ENCODE measurements at regions of chr2 and their contacts with region 1.

Region 1: GRCh38 chr2:64644177-64645004 is 9.3 kb downstream of the SERTAD2 start:
- DNase-seq: peak; percentile 72
- H3K4me3 ChIP-seq: peak overlapping the region; percentile 17 to 50 (median 30)
- H3K27ac ChIP-seq: peak overlapping the region; percentile 87 to 92 (median 90)
- H3K4me1 ChIP-seq: peaks cover 15 to 77% (median 38%) of the 10 kb centered on the region in 4 donors
- H3K27me3 ChIP-seq: no peaks in the 10 kb centered on the region
- CTCF ChIP-seq: no peak
- EP300 ChIP-seq: no peak
- POLR2A ChIP-seq: peak; percentile 71

Region 2: DNA sequence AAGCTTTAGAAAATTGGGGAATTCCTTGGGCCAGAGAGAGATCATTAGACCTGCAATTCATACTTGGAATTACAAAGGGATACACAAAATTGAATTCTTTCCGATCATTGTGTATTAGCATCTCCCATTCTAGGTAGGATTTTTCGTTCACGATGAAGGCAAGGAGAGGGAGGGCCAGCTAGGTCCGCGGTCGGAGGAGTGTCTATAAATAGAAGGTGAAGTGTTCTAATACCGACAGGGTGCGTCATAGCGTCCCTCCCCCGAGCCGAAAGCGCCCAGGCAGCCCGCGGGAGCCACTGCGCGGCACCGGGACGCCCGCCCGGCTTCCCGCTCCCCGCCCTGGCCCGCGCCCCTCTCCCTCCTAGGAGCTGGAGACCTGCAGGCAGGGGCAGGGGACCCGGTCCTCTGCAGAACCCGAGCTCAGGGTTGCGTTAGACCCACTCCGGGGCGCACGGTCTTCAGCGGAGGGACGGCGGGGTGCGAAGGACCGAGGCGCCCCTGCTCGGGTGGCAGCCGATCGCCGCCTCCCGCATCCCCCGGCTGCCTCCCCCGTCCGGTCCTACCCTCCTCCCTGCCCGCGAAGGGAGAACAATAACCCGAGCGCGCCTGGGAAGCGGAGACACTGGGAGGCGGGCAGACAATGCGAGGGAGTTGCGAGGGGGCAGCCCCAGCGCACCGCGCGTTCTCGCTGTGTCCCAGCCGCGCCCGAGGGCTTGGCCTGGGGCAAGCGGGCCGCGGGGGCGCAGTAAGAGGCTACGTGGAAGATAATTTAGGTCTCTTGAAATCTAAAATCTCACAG is 123.5 kb after region 1 on chr2:
- in situ Hi-C with region 1: no loop called
- intact Hi-C with region 1: loop called (anchors 5 kb)
- DNase-seq: peak; percentile 92
- H3K4me3 ChIP-seq: peak overlapping the region; percentile 55 to 79 (median 70)
- H3K27ac ChIP-seq: peak overlapping the region; percentile 93 to 98 (median 95)
- H3K4me1 ChIP-seq: peaks cover 0 to 28% (median 19%) of the 10 kb centered on the region in 4 donors
- H3K27me3 ChIP-seq: no peaks in the 10 kb centered on the region
- CTCF ChIP-seq: peak in 1 of 5 experiments; percentile 13
- EP300 ChIP-seq: no peak
- POLR2A ChIP-seq: peak; percentile 96

Region 3: GRCh38 chr2:64859312-64860212 is 215.2 kb after region 1 on chr2:
- in situ Hi-C with region 1: loop called in 1 of 4 experiments (anchors 10 kb)
- intact Hi-C with region 1: loop called (anchors 2 kb)
- DNase-seq: peak; percentile 94
- H3K4me3 ChIP-seq: peak overlapping the region; percentile 5 to 53 (median 38)
- H3K27ac ChIP-seq: peak overlapping the region; percentile 95 to 97 (median 96)
- H3K4me1 ChIP-seq: peaks cover 22 to 50% (median 37%) of the 10 kb centered on the region in 4 donors
- H3K27me3 ChIP-seq: no peaks in the 10 kb centered on the region
- CTCF ChIP-seq: peak in 2 of 5 experiments; percentile 18 to 40
- EP300 ChIP-seq: no peak
- POLR2A ChIP-seq: peak; percentile 70

Region 4: DNA sequence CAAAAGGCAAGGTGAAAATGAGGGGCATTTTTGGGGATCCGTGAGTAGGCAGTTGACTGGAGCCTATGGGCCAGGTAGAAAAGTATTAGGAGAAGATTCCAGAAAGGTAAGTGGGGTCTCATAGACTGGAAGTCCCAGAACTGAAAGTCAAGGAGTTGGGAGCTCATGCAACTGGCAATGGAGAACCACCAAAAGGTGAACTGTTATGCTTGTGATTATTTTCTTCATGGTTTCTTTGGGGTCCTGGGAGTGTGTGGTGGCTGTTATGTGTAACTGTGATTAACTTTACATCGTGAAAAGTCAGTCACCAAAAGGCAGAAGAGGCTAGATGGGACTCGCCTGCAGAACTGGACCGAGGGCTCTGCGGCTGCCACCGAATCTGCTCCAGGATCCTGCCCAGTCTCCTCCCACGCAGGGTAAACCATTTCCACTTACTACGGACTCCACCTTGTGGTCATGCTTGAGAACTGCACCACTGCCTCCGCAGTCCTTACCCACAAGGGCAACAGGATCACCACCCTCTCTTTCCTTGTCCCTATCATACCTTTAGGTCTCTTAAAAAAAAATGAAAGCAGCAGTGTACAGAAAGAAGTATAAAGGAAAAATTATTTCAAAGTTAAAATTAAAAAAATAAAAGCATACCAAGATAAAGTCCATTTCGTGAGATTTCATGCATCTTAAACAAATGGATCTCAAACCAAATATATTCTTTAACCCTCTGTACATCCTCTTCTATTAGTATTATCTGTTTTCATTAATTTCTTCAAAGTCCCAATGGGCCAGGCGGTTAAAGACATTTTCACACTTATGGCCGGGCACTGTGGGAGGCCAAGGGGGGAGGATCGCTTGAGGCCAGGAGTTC is 396.2 kb after region 1 on chr2:
- in situ Hi-C with region 1: loop called in 1 of 4 experiments (anchors 25 kb)
- intact Hi-C with region 1: no loop called
- DNase-seq: peak; percentile 90
- H3K4me3 ChIP-seq: no peak overlapping the region
- H3K27ac ChIP-seq: no peak overlapping the region
- H3K4me1 ChIP-seq: peaks cover 0 to 14% (median 2%) of the 10 kb centered on the region in 4 donors
- H3K27me3 ChIP-seq: no peaks in the 10 kb centered on the region
- CTCF ChIP-seq: peak; percentile 95 to 98 (median 98)
- EP300 ChIP-seq: no peak
- POLR2A ChIP-seq: no peak

Region 5: GRCh38 chr2:66228128-66228547 is 1583.7 kb after region 1 on chr2:
- in situ Hi-C with region 1: no loop called
- intact Hi-C with region 1: no loop called
- DNase-seq: no peak
- H3K4me3 ChIP-seq: no peak overlapping the region
- H3K27ac ChIP-seq: no peak overlapping the region
- H3K4me1 ChIP-seq: no peaks in the 10 kb centered on the region
- H3K27me3 ChIP-seq: no peaks in the 10 kb centered on the region
- CTCF ChIP-seq: no peak
- EP300 ChIP-seq: no peak
- POLR2A ChIP-seq: no peak